Activated CD4-positive, alpha-beta memory T cell treated with anti-CD3 and anti-CD28 coated beads for 36 hours (primary cell): ENCODE measurements at regions of chr4 and their contacts with region 1.

Region 1: DNA sequence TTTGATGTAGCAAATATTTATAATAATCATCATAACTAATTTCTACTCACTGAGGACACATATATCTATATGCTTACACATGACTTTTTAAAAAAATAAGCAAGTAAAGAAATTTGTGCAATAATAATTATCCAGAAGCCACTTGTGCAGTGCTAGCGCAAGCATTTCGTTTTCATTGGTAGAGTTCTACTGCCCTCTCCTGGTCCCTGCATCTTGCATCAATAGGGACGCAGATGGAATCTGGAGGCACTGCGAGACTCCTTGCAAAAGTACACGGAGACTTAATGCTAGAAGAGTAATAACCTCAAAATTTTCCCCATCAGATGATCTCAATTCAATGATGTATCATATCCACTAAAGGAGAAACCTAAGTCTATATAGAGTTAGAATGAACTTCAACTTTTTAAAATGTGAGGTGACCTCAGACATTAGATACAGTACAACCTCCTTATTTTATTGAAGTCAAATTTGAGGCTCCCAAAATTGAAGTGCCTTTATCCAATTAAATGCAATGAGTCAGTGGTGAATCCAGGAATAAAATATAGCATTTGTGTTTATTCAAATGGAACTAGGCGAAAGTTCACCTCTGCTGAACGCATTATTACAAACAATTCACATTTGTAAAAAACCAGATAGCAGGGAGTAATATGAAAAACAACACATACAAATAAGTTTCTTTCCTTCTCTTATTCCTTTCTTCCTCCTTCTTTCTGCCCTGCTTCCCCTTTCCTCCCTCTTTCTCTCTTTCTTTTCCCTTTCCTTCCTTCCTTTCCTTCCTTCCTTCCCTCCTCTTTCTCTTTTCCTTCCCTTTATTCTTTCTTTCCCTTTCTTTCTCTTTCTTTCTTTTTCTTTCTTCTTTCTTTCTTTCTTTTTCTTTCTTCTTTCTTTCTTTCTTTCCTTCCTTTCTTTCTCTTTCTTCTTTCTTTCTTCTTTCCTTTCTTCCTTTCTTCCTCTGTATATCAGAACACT is 450.0 kb downstream of the ANKRD50 start:
- DNase-seq: peak; percentile 29
- H3K4me3 Mint-ChIP-seq: no peak overlapping the region
- H3K27ac Mint-ChIP-seq: no peak overlapping the region
- H3K4me1 Mint-ChIP-seq: no peaks in the 10 kb centered on the region
- H3K27me3 Mint-ChIP-seq: no peaks in the 10 kb centered on the region

Region 2: DNA sequence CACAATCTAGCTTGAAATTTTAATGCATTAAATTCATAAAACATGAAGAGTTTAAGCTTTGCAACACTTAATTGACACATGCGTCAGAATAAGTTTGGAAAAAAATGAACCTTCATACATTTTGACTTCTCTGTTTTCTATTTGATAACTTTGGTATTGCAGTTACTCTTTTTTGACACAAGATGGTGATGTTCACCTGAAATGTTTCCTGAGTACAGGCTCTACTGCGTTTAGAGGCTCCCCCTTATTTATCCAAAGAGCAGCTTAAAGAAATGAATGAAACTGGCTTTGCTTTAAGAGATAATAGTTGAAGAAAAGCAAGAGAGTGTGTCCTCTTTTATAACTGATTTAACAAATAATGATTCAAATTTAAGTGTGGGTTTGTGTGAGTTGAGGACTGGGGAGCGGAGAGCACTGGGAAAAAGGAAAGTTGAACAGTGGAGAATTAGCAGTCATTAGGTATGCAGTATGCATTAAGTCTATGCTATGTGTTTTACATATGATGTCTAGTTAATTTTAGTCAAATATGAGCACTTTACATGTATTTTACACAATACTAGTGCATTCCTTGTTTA is 1159.5 kb before region 1 on chr4:
- CTCF ChIA-PET with region 1: no interaction called
- POLR2A ChIA-PET with region 1: no interaction called
- intact Hi-C with region 1: loop called (anchors 2 kb)
- DNase-seq: no peak
- H3K4me3 Mint-ChIP-seq: no peak overlapping the region
- H3K27ac Mint-ChIP-seq: no peak overlapping the region
- H3K4me1 Mint-ChIP-seq: no peaks in the 10 kb centered on the region
- H3K27me3 Mint-ChIP-seq: no peaks in the 10 kb centered on the region

Region 3: DNA sequence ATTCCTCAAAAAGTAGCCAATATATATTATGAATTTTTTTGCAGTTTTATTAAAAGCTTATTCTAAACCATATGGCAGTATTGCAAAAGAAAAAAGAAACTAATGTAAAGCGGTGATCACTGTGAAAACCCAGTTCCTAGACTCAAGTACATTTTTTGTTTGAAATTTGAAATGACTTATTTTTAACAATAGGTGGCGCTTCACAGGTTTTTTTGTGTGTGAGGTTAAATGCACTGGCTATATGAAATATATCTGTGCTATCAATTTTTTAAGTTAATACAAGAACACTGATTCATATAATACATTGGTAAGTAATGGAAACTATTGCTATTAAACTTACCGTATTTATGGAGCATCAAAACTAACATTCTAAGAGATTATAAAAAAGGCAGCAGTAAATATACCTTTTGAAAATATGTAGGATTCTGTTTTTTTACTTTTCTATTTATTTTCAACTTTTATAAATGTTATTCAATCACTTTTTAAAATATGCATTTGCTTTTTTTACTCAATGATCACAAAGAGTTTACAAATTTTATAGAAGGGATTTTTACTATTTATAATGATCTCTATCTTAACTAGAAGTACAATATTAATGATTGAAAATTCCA is 871.5 kb before region 1 on chr4:
- CTCF ChIA-PET with region 1: no interaction called
- POLR2A ChIA-PET with region 1: no interaction called
- intact Hi-C with region 1: loop called (anchors 5 kb)
- DNase-seq: no peak
- H3K4me3 Mint-ChIP-seq: no peak overlapping the region
- H3K27ac Mint-ChIP-seq: no peak overlapping the region
- H3K4me1 Mint-ChIP-seq: peaks cover 3% of the 10 kb centered on the region
- H3K27me3 Mint-ChIP-seq: peaks cover 3% of the 10 kb centered on the region

Region 4: GRCh38 chr4:123776254-123776653 is 486.2 kb before region 1 on chr4:
- CTCF ChIA-PET with region 1: interaction called, 4 read pairs
- POLR2A ChIA-PET with region 1: no interaction called
- intact Hi-C with region 1: loop called (anchors 1 kb)
- DNase-seq: no peak
- H3K4me3 Mint-ChIP-seq: no peak overlapping the region
- H3K27ac Mint-ChIP-seq: no peak overlapping the region
- H3K4me1 Mint-ChIP-seq: no peaks in the 10 kb centered on the region
- H3K27me3 Mint-ChIP-seq: no peaks in the 10 kb centered on the region

Region 5: DNA sequence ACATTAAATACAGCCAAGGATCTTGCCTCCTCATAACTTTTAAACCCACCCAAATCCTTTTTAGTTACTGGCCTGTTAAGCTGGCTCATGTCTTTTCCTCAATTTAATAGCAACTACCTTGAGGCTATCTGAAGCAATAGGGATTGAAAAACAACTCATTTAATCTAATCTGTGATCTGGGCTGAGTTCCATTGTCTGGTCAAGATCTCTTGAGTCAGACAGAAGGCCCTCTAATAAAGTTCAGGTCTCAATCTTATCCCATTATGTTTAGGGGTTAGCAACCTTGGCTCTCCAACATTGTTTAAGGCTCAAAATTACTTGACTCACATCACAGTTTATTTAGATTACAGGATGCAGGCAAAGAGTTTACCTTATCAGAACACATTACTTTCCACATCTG is 14.0 kb after region 1 on chr4:
- CTCF ChIA-PET with region 1: no interaction called
- POLR2A ChIA-PET with region 1: no interaction called
- intact Hi-C with region 1: no loop called
- DNase-seq: no peak
- H3K4me3 Mint-ChIP-seq: no peak overlapping the region
- H3K27ac Mint-ChIP-seq: no peak overlapping the region
- H3K4me1 Mint-ChIP-seq: no peaks in the 10 kb centered on the region
- H3K27me3 Mint-ChIP-seq: peaks cover 2% of the 10 kb centered on the region